BJ (cell line): ENCODE measurements at regions of chr2 and their contacts with region 1.

Region 1: GRCh38 chr2:27281855-27282559 is at the start of gene TRIM54:
- DNase-seq: no peak
- H3K4me3 ChIP-seq: no peak within 1 kb of the TSS
- H3K27me3 ChIP-seq: peaks cover 10% of the 10 kb centered on the region
- CTCF ChIP-seq: no peak
- polyA plus RNA-seq, gene TRIM54: 0.05 TPM in 1 of 2 replicates, not detected in the other

Region 2: DNA sequence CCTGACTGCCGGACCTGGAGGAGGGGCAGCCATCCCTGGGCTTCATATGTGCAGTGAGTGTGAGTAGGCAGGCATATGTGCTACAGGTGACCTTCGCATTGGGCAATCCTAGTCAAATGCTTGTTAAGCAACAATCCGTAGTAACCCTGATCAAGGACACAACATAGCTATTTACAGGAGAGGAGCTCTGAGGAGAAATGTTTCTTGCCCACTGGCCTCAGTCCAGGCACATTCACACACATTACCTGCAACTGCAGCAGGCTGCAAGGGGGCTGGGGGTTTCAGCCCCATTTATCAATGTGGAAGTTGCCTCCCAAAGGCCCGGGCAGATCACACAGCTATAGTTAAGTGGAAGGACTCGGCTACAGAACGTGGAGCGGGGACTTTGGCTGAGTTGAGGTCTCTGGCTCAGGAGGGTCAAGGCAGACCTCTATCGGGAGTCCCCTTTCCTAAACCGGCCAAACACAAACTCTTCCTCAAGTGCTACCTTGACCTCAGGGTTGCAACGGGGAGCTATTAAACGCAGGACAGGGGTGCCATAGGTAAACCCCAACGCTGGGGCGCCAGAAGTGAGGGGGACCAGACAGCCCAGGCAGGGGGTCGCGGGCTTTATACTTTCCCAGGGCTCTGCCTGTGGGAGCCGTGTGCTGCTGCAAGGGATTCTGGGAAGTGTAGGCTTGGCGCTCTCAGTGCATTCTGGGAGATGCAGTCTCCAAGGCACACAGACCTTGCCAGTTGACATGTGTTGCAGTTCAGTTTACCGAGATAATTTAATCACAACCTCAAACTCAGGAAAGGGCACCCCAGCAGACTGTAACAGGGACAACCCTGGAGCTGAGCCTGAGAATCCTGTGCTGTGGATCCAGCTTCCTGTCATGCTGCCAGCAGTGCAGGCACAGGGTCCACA is 186.0 kb before region 1 on chr2:
- CTCF ChIA-PET with region 1: interaction called, 94 read pairs
- POLR2A ChIA-PET with region 1: no interaction called
- DNase-seq: no peak
- H3K4me3 ChIP-seq: no peak overlapping the region
- H3K27me3 ChIP-seq: no peaks in the 10 kb centered on the region
- CTCF ChIP-seq: no peak

Region 3: GRCh38 chr2:27249891-27250651 is 31.9 kb before region 1 on chr2:
- CTCF ChIA-PET with region 1: interaction called, 24 read pairs
- POLR2A ChIA-PET with region 1: no interaction called
- DNase-seq: no peak
- H3K4me3 ChIP-seq: no peak overlapping the region
- H3K27me3 ChIP-seq: peaks cover 13% of the 10 kb centered on the region
- CTCF ChIP-seq: peak; percentile 76

Region 4: GRCh38 chr2:27264753-27265535 is 17.1 kb before region 1 on chr2:
- CTCF ChIA-PET with region 1: interaction called, 64 read pairs
- POLR2A ChIA-PET with region 1: no interaction called
- DNase-seq: no peak
- H3K4me3 ChIP-seq: peak overlapping the region; percentile 10; the same call in 1 of the 2 replicates
- H3K27me3 ChIP-seq: peaks cover 58% of the 10 kb centered on the region
- CTCF ChIP-seq: peak; percentile 52

Region 5: DNA sequence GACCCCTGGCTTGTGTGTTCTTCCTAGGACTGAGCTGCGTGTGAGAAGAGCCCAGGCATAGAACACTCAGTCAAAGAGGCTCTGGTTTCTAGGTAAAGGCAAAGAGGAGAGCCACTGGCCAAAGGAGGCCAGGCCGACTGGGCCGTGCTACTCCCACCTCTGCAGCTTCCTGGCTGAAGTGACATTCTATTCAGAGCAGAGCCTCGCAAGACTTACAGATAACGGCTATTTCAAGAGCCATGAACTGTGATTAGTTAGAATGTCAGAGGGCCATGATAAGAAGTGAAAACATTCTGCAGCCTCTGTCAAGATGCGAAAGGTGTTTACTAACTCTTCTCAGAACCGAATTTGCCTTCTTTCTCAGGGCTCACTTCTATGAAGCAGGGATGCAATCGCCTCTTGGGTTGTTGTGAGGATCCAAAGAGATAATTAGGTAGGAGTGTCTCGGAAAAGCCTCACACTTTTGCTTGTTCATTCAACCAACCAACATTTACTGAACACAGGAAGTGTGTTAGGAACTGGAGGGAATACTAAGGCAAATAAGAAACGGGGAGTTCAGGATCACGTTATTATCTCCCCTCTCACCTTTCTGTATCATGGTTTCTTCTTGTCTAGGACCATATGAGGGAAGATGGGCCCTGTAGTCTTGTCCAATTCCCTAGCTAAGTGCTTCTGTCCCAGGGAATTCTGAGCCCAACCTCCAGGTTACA is 10.2 kb before region 1 on chr2:
- CTCF ChIA-PET with region 1: interaction called, 64 read pairs
- POLR2A ChIA-PET with region 1: no interaction called
- DNase-seq: no peak
- H3K4me3 ChIP-seq: no peak overlapping the region
- H3K27me3 ChIP-seq: peaks cover 17% of the 10 kb centered on the region
- CTCF ChIP-seq: no peak

Region 6: DNA sequence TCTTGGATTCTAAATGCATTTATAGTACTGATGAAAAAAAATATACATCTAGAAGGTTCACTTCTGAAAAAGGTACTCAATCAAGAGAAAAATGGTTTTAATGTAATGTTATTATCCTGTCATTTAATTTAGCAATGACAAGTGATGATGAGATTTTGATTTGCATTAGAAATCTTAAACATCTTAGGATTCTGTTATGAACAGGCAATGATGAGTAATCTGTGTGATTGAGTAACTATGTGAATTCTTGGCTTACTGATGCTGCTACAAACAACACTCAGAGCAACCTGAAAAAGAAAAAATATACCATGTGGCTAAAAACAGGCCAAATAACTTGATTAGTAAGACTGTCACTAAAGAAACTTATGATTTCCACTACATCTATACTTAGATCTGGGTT is 578.1 kb after region 1 on chr2:
- CTCF ChIA-PET with region 1: no interaction called
- POLR2A ChIA-PET with region 1: no interaction called
- DNase-seq: peak; percentile 53
- H3K4me3 ChIP-seq: no peak overlapping the region
- H3K27me3 ChIP-seq: no peaks in the 10 kb centered on the region
- CTCF ChIP-seq: no peak